CD8-positive, alpha-beta T cell (primary cell): ENCODE measurements at regions of chr6 and their contacts with region 1.

Region 1: DNA sequence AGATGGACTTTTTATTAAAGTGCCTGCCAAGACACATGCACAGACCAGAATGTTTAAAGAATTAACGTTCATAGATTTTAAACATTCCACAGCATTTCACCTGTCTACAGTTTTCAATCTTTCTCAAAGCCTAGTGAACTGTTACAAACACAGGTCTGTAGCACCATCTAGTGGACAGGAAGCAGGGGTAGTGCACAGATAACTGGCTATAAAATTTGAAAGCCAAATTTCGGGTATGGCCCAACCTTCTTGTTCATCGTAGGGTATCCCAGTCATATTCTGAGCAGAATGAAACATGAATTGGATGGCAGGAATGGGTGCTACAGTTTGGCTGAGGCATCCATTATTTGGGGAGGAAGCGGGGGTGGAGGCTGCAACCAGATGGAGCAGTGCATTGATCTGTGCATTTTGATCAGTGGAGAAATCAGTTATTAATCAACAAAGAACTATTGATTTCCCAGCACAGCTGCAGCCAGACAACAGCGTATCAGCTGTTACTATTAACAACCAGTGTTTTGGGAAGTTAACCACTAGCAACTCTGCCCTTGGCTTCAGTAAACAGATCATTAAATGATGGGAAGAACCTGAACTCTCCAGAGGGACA is 56.1 kb upstream of the B3GAT2 start:
- DNase-seq: peak in 2 of 9 experiments; percentile 53 to 65
- ATAC-seq: peak; percentile 42
- H3K4me3 ChIP-seq: no peak overlapping the region
- H3K4me3 Mint-ChIP-seq: no peak overlapping the region
- H3K27ac ChIP-seq: no peak overlapping the region
- H3K27ac Mint-ChIP-seq: no peak overlapping the region
- H3K4me1 ChIP-seq: no peaks in the 10 kb centered on the region
- H3K4me1 Mint-ChIP-seq: no peaks in the 10 kb centered on the region
- H3K27me3 ChIP-seq: peaks cover 3 to 4% of the 10 kb centered on the region in 2 experiments
- H3K27me3 Mint-ChIP-seq: peaks cover 27% of the 10 kb centered on the region
- CTCF ChIP-seq: peak; percentile 62

Region 2: GRCh38 chr6:70221025-70221714 is 791.8 kb before region 1 on chr6:
- CTCF ChIA-PET with region 1: no interaction called
- POLR2A ChIA-PET with region 1: no interaction called
- intact Hi-C with region 1: loop called in 1 of 2 experiments (anchors 5 kb)
- DNase-seq: peak in 2 of 9 experiments; percentile 17 to 32
- ATAC-seq: peak; percentile 49
- H3K4me3 ChIP-seq: no peak overlapping the region
- H3K4me3 Mint-ChIP-seq: no peak overlapping the region
- H3K27ac ChIP-seq: no peak overlapping the region
- H3K27ac Mint-ChIP-seq: no peak overlapping the region
- H3K4me1 ChIP-seq: no peaks in the 10 kb centered on the region
- H3K4me1 Mint-ChIP-seq: no peaks in the 10 kb centered on the region
- H3K27me3 ChIP-seq: no peaks in the 10 kb centered on the region
- H3K27me3 Mint-ChIP-seq: peaks cover 18% of the 10 kb centered on the region
- CTCF ChIP-seq: peak; percentile 88

Region 3: DNA sequence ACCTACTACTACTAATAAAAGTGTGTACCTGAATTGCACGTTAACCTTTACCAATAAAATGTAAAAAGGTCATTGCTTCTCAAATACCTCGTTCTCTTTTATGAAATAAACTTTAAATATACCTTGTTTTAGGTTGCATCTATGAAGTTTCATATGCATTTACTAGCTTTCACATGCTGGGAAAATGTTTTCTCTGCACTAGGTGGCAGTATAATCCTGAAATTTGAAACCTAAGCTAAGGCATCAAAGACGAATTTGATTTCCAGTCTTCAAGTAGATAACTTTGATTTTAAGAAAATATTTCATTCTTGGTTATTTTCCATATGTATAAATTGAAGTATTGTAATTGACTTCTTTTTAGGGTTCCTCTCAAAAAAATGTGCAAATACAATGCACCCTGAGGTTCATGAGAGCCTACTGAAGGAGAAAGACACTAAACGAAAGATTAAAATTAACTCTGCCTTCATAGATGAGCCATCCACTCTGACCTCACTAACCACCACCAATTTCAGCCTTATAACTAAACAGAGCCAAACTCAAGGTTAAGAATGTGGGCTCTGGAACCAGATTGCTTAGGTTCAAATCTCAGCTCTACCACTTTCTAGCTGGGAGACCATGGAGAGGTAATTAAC is 702.8 kb before region 1 on chr6:
- CTCF ChIA-PET with region 1: no interaction called
- POLR2A ChIA-PET with region 1: no interaction called
- intact Hi-C with region 1: loop called in 1 of 2 experiments (anchors 2 kb)
- DNase-seq: peak in 2 of 9 experiments; percentile 28 to 44
- ATAC-seq: no peak
- H3K4me3 ChIP-seq: no peak overlapping the region
- H3K4me3 Mint-ChIP-seq: no peak overlapping the region
- H3K27ac ChIP-seq: no peak overlapping the region
- H3K27ac Mint-ChIP-seq: no peak overlapping the region
- H3K4me1 ChIP-seq: no peaks in the 10 kb centered on the region
- H3K4me1 Mint-ChIP-seq: no peaks in the 10 kb centered on the region
- H3K27me3 ChIP-seq: no peaks in the 10 kb centered on the region
- H3K27me3 Mint-ChIP-seq: peaks cover 8% of the 10 kb centered on the region
- CTCF ChIP-seq: peak; percentile 49

Region 4: GRCh38 chr6:70520575-70520974 is 492.4 kb before region 1 on chr6:
- CTCF ChIA-PET with region 1: no interaction called
- POLR2A ChIA-PET with region 1: no interaction called
- intact Hi-C with region 1: loop called in 1 of 2 experiments (anchors 5 kb)
- DNase-seq: peak in 2 of 9 experiments; percentile 36 to 46
- ATAC-seq: no peak
- H3K4me3 ChIP-seq: no peak overlapping the region
- H3K4me3 Mint-ChIP-seq: no peak overlapping the region
- H3K27ac ChIP-seq: no peak overlapping the region
- H3K27ac Mint-ChIP-seq: no peak overlapping the region
- H3K4me1 ChIP-seq: no peaks in the 10 kb centered on the region
- H3K4me1 Mint-ChIP-seq: peaks cover 7% of the 10 kb centered on the region
- H3K27me3 ChIP-seq: no peaks in the 10 kb centered on the region
- H3K27me3 Mint-ChIP-seq: no peaks in the 10 kb centered on the region
- CTCF ChIP-seq: peak; percentile 38

Region 5: GRCh38 chr6:70575891-70576495 is 437.0 kb before region 1 on chr6:
- CTCF ChIA-PET with region 1: no interaction called
- POLR2A ChIA-PET with region 1: no interaction called
- intact Hi-C with region 1: no loop called
- DNase-seq: no peak
- ATAC-seq: no peak
- H3K4me3 ChIP-seq: no peak overlapping the region
- H3K4me3 Mint-ChIP-seq: no peak overlapping the region
- H3K27ac ChIP-seq: no peak overlapping the region
- H3K27ac Mint-ChIP-seq: no peak overlapping the region
- H3K4me1 ChIP-seq: no peaks in the 10 kb centered on the region
- H3K4me1 Mint-ChIP-seq: peaks cover 7% of the 10 kb centered on the region
- H3K27me3 ChIP-seq: no peaks in the 10 kb centered on the region
- H3K27me3 Mint-ChIP-seq: no peaks in the 10 kb centered on the region
- CTCF ChIP-seq: no peak

Region 6: GRCh38 chr6:70706491-70707123 is 306.4 kb before region 1 on chr6:
- CTCF ChIA-PET with region 1: interaction called, 3 read pairs
- POLR2A ChIA-PET with region 1: no interaction called
- intact Hi-C with region 1: loop called (anchors 2 kb)
- DNase-seq: peak in 3 of 9 experiments; percentile 20 to 67 (median 58)
- ATAC-seq: no peak
- H3K4me3 ChIP-seq: no peak overlapping the region
- H3K4me3 Mint-ChIP-seq: no peak overlapping the region
- H3K27ac ChIP-seq: no peak overlapping the region
- H3K27ac Mint-ChIP-seq: no peak overlapping the region
- H3K4me1 ChIP-seq: peaks cover 5% of the 10 kb centered on the region
- H3K4me1 Mint-ChIP-seq: peaks cover 41% of the 10 kb centered on the region
- H3K27me3 ChIP-seq: no peaks in the 10 kb centered on the region
- H3K27me3 Mint-ChIP-seq: no peaks in the 10 kb centered on the region
- CTCF ChIP-seq: peak; percentile 90

Region 7: GRCh38 chr6:71181565-71181964 is 168.6 kb after region 1 on chr6:
- CTCF ChIA-PET with region 1: no interaction called
- POLR2A ChIA-PET with region 1: no interaction called
- intact Hi-C with region 1: no loop called
- DNase-seq: no peak
- ATAC-seq: no peak
- H3K4me3 ChIP-seq: no peak overlapping the region
- H3K4me3 Mint-ChIP-seq: no peak overlapping the region
- H3K27ac ChIP-seq: no peak overlapping the region
- H3K27ac Mint-ChIP-seq: no peak overlapping the region
- H3K4me1 ChIP-seq: no peaks in the 10 kb centered on the region
- H3K4me1 Mint-ChIP-seq: no peaks in the 10 kb centered on the region
- H3K27me3 ChIP-seq: no peaks in the 10 kb centered on the region
- H3K27me3 Mint-ChIP-seq: peaks cover 29% of the 10 kb centered on the region
- CTCF ChIP-seq: no peak

Region 8: GRCh38 chr6:71220466-71220865 is 207.5 kb after region 1 on chr6:
- CTCF ChIA-PET with region 1: no interaction called
- POLR2A ChIA-PET with region 1: no interaction called
- intact Hi-C with region 1: no loop called
- DNase-seq: no peak
- ATAC-seq: no peak
- H3K4me3 ChIP-seq: no peak overlapping the region
- H3K4me3 Mint-ChIP-seq: no peak overlapping the region
- H3K27ac ChIP-seq: no peak overlapping the region
- H3K27ac Mint-ChIP-seq: no peak overlapping the region
- H3K4me1 ChIP-seq: no peaks in the 10 kb centered on the region
- H3K4me1 Mint-ChIP-seq: peaks cover 3% of the 10 kb centered on the region
- H3K27me3 ChIP-seq: no peaks in the 10 kb centered on the region
- H3K27me3 Mint-ChIP-seq: peaks cover 2% of the 10 kb centered on the region
- CTCF ChIP-seq: no peak

Region 9: DNA sequence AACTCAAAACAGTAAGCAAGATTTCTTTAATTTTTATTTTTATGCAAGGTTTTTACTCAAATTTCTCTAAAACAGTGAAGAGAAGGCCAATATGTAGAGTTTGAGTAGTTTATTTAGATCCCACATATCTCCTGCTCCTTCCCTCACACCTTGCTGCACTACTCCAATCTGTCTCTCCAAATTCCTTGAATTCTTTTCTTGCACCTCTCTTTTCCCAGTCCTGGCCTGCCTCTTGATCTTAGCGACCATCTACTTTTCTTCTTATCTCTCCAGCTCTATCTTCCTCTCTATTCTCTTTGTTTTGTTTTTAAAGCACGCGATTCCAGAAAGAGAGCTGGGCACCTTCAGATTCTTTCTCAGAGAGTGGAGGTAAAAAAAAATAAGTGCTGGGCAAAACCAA is 1522.2 kb after region 1 on chr6:
- CTCF ChIA-PET with region 1: no interaction called
- POLR2A ChIA-PET with region 1: no interaction called
- intact Hi-C with region 1: loop called in 1 of 2 experiments (anchors 5 kb)
- DNase-seq: no peak
- ATAC-seq: no peak
- H3K4me3 ChIP-seq: no peak overlapping the region
- H3K4me3 Mint-ChIP-seq: no peak overlapping the region
- H3K27ac ChIP-seq: no peak overlapping the region
- H3K27ac Mint-ChIP-seq: no peak overlapping the region
- H3K4me1 ChIP-seq: no peaks in the 10 kb centered on the region
- H3K4me1 Mint-ChIP-seq: no peaks in the 10 kb centered on the region
- H3K27me3 ChIP-seq: no peaks in the 10 kb centered on the region
- H3K27me3 Mint-ChIP-seq: peaks cover 8% of the 10 kb centered on the region
- CTCF ChIP-seq: no peak